Cardiac septum (tissue), 1 donor: ENCODE measurements at regions of chr6 and their contacts with region 1.

Region 1: GRCh38 chr6:4313044-4313686 is 177.8 kb upstream of the ECI2 start:
- DNase-seq: no peak

Region 2: DNA sequence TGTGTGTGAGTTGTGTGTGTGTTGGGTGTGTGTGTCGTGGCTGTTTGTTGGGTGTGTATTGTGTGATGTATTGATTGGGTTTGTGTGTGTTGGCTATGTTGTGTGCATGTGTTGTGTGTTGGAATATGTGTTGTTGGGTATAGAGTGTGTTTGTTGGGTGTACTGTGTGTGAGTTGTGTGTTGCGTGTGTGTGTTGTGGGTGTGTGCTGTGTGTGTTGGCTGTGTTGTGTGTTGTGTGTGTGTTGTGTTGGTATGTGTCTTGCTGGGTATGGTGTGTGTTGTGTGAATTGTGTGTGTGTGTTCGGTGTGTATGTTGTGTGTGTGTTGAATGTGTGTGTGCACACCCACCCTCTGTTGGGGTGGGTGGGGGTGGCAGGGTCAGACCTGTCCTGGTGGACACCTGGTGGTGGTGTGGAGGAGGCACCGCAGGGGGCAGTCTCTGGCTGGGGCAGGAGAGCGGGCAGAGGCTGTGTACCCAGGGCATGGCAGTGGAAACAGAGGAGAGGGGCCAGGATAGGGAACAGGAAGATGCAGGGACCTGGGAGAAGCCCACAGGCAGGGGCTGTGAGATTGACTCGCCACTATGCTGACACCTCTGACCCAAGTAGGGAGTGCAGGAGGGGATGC is 536.2 kb before region 1 on chr6:
- intact Hi-C with region 1: no loop called
- DNase-seq: no peak

Region 3: GRCh38 chr6:4074478-4075235 is 238.5 kb before region 1 on chr6:
- intact Hi-C with region 1: no loop called
- DNase-seq: no peak

Region 4: DNA sequence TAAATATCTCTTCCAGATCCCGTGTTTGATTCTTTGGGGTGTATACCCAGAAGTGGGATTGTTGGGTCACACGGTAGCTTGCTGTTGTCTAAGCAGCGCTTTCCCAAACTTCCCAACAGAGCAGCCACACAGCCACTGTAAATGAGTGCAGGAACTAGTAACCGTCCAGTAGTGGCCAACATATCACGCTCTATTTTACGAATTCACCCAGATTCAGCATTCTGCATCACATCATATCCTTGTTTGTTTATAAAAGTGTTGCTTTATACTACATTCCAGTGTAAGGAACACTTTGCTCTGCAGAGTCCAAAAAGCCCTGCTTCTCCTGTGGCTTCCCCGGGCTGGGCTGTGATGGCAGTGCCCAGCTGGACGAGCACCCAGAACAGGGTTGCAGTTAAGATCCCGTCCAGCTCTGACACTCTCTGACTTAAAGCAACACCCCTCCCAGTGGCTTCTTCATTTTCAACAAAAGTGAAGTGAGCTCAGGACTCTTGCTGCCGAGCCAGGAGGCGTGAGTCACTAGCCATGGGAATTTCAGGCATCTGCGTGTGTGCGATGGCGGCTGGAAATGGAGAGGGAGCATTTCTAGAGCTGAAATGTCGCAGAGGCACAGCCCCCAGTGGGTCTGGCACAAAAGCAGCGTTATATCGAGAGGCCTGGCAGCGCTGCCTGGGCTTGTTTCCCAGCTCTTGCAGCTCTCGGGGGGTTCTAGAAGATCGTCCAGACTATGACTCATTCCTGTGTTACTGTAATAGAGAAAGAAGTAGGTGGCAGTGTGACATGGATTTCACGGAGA is 38.6 kb after region 1 on chr6:
- intact Hi-C with region 1: loop called (anchors 5 kb)
- DNase-seq: peak; percentile 86

Region 5: DNA sequence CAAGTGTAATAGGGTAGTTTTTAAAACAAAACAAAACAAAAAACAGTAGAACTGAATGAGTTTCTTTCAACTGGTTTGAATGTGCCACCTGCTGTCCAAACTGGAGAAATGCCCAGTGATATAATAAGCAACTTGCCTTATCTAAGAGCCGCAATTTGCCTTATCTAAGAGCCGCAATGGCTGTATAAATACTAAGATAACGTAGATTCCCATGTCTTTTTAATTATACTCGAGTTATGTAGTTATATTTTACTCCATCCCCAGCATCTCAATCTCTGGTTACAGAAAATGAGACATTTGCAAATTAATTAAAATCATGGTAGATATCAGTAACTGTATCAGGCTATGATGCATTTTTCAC is 623.5 kb after region 1 on chr6:
- intact Hi-C with region 1: loop called (anchors 5 kb)
- DNase-seq: no peak